Naive thymus-derived CD4-positive, alpha-beta T cell (primary cell): ENCODE measurements at regions of chr7 and their contacts with region 1.

Region 1: DNA sequence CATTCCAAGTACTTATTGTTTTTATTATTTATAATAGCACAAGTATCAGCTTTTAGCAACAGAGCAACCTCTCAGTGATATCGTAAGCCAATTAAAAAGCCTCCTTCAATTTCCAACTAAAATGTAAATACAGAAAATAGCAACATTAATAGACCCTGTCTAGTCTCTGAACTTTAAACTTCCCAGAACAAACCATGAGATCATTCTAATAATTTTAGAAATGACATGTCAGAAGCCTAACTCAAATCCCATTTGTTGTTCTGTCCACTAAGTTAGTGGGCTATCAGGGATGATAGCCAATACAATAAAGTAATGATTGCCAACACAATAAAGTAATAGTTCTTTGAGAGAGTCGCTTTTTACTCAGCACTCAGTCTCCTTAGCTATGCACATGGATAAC is 22.3 kb upstream of the LRRN3 start:
- DNase-seq: no peak
- ATAC-seq: no peak
- H3K4me3 ChIP-seq: no peak overlapping the region
- H3K4me3 Mint-ChIP-seq: no peak overlapping the region
- H3K27ac ChIP-seq: no peak overlapping the region
- H3K27ac Mint-ChIP-seq: no peak overlapping the region
- H3K4me1 ChIP-seq: peaks cover 0 to 11% of the 10 kb centered on the region in 2 donors
- H3K4me1 Mint-ChIP-seq: peaks cover 4 to 52% (median 44%) of the 10 kb centered on the region in 7 donors
- H3K27me3 ChIP-seq: no peaks in the 10 kb centered on the region
- H3K27me3 Mint-ChIP-seq: no peaks in the 10 kb centered on the region

Region 2: DNA sequence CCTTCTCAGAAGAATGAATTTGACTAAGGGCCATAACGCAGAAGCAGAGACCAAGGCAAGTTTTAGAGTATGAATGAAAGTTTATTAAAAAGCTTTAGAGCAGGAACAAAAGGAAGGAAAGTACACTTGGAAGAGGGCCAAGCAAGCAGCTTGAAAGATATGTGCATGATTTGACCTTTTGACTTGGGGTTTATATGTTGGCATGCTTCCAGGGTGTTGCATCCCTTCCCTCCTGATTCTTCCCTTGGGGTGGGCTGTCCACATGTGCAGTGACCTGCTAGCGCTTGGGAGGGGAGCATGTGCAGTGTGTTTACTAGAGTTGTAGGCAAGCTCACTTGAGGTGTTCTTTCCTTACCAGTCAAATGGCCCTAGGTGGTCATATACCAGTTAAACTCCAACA is 15.6 kb before region 1 on chr7:
- CTCF ChIA-PET with region 1: interaction called, 3 read pairs
- POLR2A ChIA-PET with region 1: no interaction called
- intact Hi-C with region 1: loop called in 1 of 2 experiments (anchors 2 kb)
- DNase-seq: no peak
- ATAC-seq: no peak
- H3K4me3 ChIP-seq: no peak overlapping the region
- H3K4me3 Mint-ChIP-seq: peak overlapping the region in 2 of 10 donors; percentile 19 to 31
- H3K27ac ChIP-seq: no peak overlapping the region
- H3K27ac Mint-ChIP-seq: peak overlapping the region in 2 of 9 donors; percentile 47
- H3K4me1 ChIP-seq: peaks cover 0 to 10% of the 10 kb centered on the region in 2 donors
- H3K4me1 Mint-ChIP-seq: peaks cover 7 to 60% (median 37%) of the 10 kb centered on the region in 7 donors
- H3K27me3 ChIP-seq: no peaks in the 10 kb centered on the region
- H3K27me3 Mint-ChIP-seq: no peaks in the 10 kb centered on the region